ENCODE measurements at regions of chr22 and their contacts with region 1.

Region 1: GRCh38 chr22:44625981-44626687 is 75.9 kb upstream of the PRR5 start:
- DNase-seq: peak; percentile 40 to 84 (median 74)
- ATAC-seq: peak; percentile 67 to 96 (median 89)
- H3K4me3 ChIP-seq: no peak overlapping the region
- H3K27ac ChIP-seq: no peak overlapping the region
- H3K4me1 ChIP-seq: no peaks in the 10 kb centered on the region
- H3K27me3 ChIP-seq: no peaks in the 10 kb centered on the region
- CTCF ChIP-seq: peak; percentile 95 to 98 (median 96)

Region 2: DNA sequence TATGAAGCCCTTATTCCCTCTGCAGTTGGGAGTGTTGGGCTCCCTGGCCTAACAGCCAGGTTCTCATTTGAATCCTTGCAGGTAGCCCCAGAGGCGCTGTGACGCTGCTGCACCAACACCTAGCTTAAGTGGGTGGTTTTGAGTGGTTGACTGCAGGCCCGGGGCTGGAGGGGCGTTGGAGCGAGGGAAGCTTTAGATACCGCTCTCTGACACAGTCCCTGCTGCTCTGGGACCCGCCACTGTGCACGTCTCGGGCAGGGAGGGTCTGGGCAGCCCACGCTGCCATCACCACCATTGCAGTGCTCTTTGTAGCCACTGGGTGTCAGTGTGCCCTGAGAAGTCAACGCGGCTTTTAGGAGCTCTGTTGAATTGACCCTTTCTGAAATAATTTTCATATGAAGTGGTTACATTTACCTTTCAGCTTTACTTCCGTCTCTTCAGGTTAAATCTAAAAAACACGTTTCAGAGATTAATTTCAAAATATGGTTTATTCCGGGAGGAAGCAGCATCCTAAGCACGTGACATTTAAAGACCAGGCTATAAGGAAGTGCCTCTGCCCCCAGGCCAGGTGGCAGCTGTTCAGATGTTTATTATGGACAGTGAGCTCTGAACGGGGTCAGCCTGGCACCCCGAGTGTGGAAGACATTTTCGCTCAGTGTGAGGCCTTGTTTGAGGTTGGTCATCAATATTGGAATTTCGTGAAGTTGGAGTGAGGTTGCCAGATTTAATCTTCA is 632.9 kb before region 1 on chr22:
- intact Hi-C with region 1: loop called in 2 of 3 experiments (anchors 5 to 10 kb)
- DNase-seq: peak in 3 of 6 donors; percentile 46 to 67 (median 56)
- ATAC-seq: peak in 3 of 4 donors; percentile 87 to 92 (median 89)
- H3K4me3 ChIP-seq: no peak overlapping the region
- H3K27ac ChIP-seq: no peak overlapping the region
- H3K4me1 ChIP-seq: no peaks in the 10 kb centered on the region
- H3K27me3 ChIP-seq: no peaks in the 10 kb centered on the region
- CTCF ChIP-seq: peak; percentile 78 to 96 (median 88)

Region 3: GRCh38 chr22:44080936-44081861 is 544.9 kb before region 1 on chr22:
- intact Hi-C with region 1: loop called in 2 of 3 experiments (anchors 5 kb)
- DNase-seq: peak in 5 of 6 donors; percentile 37 to 85 (median 63)
- ATAC-seq: peak in 3 of 4 donors; percentile 80 to 83 (median 81)
- H3K4me3 ChIP-seq: no peak overlapping the region
- H3K27ac ChIP-seq: no peak overlapping the region
- H3K4me1 ChIP-seq: no peaks in the 10 kb centered on the region
- H3K27me3 ChIP-seq: no peaks in the 10 kb centered on the region
- CTCF ChIP-seq: peak; percentile 71 to 78 (median 75)

Region 4: GRCh38 chr22:44567846-44568493 is 58.2 kb before region 1 on chr22:
- intact Hi-C with region 1: loop called in 1 of 3 experiments (anchors 10 kb)
- DNase-seq: peak in 5 of 6 donors; percentile 31 to 61 (median 51)
- ATAC-seq: no peak
- H3K4me3 ChIP-seq: no peak overlapping the region
- H3K27ac ChIP-seq: no peak overlapping the region
- H3K4me1 ChIP-seq: no peaks in the 10 kb centered on the region
- H3K27me3 ChIP-seq: no peaks in the 10 kb centered on the region
- CTCF ChIP-seq: peak in 3 of 4 donors; percentile 14 to 34 (median 29)

Region 5: GRCh38 chr22:44913198-44913983 is 287.3 kb after region 1 on chr22:
- intact Hi-C with region 1: no loop called
- DNase-seq: peak in 2 of 6 donors; percentile 32 to 43
- ATAC-seq: no peak
- H3K4me3 ChIP-seq: no peak overlapping the region
- H3K27ac ChIP-seq: no peak overlapping the region
- H3K4me1 ChIP-seq: no peaks in the 10 kb centered on the region
- H3K27me3 ChIP-seq: no peaks in the 10 kb centered on the region
- CTCF ChIP-seq: no peak